ENCODE measurements at regions of chr4 and their contacts with region 1.

Region 1: GRCh38 chr4:48578132-48578968 is 88.3 kb downstream of the ZAR1 start:
- DNase-seq: peak in 2 of 3 donors; percentile 31 to 43
- ATAC-seq: peak; percentile 85 to 89
- H3K4me3 ChIP-seq: no peak overlapping the region
- H3K27ac ChIP-seq: no peak overlapping the region
- H3K4me1 ChIP-seq: no peaks in the 10 kb centered on the region
- H3K27me3 ChIP-seq: no peaks in the 10 kb centered on the region

Region 2: GRCh38 chr4:48681856-48682255 is 103.5 kb after region 1 on chr4:
- intact Hi-C with region 1: loop called in 2 of 4 experiments (anchors 5 to 10 kb)
- DNase-seq: no peak
- ATAC-seq: peak; percentile 24 to 63
- H3K4me3 ChIP-seq: no peak overlapping the region
- H3K27ac ChIP-seq: no peak overlapping the region
- H3K4me1 ChIP-seq: no peaks in the 10 kb centered on the region
- H3K27me3 ChIP-seq: no peaks in the 10 kb centered on the region

Region 3: DNA sequence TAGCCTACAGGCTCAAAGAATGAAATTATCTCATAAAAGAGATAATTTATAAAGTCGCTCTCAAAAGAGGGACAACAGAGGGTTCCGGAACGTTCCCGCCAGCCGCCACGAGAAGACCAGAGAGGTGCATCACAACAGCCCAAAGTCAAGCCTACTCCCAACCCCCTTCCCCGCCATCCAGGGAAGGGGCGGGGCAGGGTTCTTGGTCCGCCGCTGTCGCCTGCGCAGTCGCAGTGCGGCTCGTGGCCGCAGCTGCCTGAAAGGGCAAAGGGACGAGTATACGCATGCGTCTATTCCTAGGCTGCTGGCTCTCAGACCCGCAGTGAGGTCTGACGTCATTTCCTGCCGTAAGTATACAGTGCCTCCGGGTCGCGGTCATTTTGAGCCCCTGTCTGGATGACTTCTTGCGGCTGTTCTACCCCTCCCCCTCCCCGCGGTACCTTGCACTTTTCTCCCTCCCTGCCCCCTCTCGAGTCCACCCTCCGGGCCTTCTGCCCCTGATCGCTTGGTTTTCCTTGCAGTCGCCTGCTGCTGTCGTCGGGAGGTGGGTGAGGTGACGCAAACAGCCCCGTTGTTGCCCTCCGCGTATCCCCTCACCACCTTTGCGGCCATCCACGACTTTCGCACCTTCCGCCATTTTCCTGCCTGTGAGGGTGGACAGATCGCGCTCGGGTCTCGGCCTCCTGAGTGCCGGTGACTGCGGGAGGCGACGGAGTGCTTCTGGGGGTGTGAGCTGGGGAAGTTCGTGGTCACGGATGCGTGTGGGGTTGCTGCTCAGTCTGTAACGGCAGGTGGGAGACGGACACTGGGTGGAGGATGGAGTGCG is 252.6 kb after region 1 on chr4 and contains the start of gene OCIAD1:
- intact Hi-C with region 1: loop called in 3 of 4 experiments (anchors 10 kb)
- DNase-seq: peak; percentile 97 to 98 (median 98)
- ATAC-seq: peak; percentile 100
- H3K4me3 ChIP-seq: peak within 1 kb of the TSS; percentile 79
- H3K27ac ChIP-seq: peak within 1 kb of the TSS; percentile 92
- H3K4me1 ChIP-seq: no peaks in the 10 kb centered on the region
- H3K27me3 ChIP-seq: no peaks in the 10 kb centered on the region
- total RNA-seq, gene OCIAD1: 150 to 155 (median 151) TPM

Region 4: DNA sequence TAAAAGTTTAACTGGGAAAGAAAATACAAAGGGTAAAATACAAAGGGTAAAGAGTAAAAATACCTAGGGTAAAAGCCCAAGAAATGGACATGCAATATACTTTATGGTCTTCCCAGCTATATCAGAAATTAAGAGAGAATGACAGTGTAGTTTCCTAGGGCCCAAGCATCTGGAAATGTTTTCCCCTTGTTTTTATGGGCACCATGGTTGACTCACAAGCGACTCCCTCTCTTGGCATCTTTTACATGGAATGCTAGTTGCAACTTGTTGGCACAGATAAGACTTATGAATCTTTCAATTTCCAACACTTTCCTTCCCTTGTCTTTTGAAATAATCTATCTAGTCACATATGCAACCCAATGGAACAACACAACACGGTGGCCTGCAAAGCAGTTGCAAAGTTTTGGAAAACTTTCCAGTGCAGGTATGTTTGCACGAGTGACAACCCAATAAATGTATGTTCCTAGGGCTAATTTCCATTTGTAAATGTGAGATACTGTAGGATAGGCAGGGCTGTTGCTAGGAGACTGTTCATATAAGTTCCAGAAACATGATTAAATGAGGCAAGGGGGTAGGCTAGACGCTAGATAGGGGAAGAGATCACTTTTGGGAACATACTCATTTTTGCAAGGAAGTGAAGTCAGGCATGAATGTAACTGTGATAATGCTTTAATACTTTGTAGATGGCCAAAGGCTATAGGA is 371.3 kb after region 1 on chr4:
- intact Hi-C with region 1: loop called in 1 of 4 experiments (anchors 10 kb)
- DNase-seq: no peak
- ATAC-seq: no peak
- H3K4me3 ChIP-seq: no peak overlapping the region
- H3K27ac ChIP-seq: no peak overlapping the region
- H3K4me1 ChIP-seq: no peaks in the 10 kb centered on the region
- H3K27me3 ChIP-seq: no peaks in the 10 kb centered on the region

Region 5: GRCh38 chr4:48963042-48963679 is 384.8 kb after region 1 on chr4:
- intact Hi-C with region 1: loop called (anchors 2 to 10 kb)
- DNase-seq: peak; percentile 61 to 73 (median 70)
- ATAC-seq: peak; percentile 81 to 83
- H3K4me3 ChIP-seq: no peak overlapping the region
- H3K27ac ChIP-seq: no peak overlapping the region
- H3K4me1 ChIP-seq: no peaks in the 10 kb centered on the region
- H3K27me3 ChIP-seq: no peaks in the 10 kb centered on the region

Measured in right cardiac atrium (tissue), 5 donors.